Dendritic cell treated with granulocyte-macrophage colony-stimulating factor and Interleukin-4, amounts not matched to agents 40 ng/mL and 50 ng/mL, for 4 days (primary cell): ENCODE measurements at regions of chr20 and their contacts with region 1.

Region 1: DNA sequence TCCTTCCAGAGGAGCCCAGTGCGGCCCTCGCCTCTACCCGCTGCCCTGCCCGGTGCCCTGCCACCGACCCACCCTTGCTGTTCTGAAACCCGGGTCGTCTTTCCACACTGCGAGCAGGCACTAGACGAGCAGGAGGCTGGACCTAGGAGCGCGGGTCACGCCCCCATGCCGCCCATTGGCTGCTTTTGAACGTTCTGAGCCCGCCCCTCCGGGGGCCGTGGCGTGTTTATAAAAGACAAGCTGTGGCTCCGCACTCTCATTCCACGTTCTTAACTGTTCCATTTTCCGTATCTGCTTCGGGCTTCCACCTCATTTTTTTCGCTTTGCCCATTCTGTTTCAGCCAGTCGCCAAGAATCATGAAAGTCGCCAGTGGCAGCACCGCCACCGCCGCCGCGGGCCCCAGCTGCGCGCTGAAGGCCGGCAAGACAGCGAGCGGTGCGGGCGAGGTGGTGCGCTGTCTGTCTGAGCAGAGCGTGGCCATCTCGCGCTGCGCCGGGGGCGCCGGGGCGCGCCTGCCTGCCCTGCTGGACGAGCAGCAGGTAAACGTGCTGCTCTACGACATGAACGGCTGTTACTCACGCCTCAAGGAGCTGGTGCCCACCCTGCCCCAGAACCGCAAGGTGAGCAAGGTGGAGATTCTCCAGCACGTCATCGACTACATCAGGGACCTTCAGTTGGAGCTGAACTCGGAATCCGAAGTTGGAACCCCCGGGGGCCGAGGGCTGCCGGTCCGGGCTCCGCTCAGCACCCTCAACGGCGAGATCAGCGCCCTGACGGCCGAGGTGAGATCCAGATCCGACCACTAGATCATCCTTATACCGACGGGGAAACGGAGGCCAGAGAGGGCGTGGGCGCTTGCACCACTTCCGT is at the start of gene ID1:
- H3K4me3 Mint-ChIP-seq: peak within 1 kb of the TSS; percentile 91
- H3K27ac Mint-ChIP-seq: peak within 1 kb of the TSS; percentile 50
- H3K4me1 Mint-ChIP-seq: peaks cover 38% of the 10 kb centered on the region
- H3K27me3 Mint-ChIP-seq: peaks cover 49% of the 10 kb centered on the region

Region 2: GRCh38 chr20:31274441-31274840 is 330.8 kb before region 1 on chr20:
- intact Hi-C with region 1: no loop called
- H3K4me3 Mint-ChIP-seq: no peak overlapping the region
- H3K27ac Mint-ChIP-seq: no peak overlapping the region
- H3K4me1 Mint-ChIP-seq: no peaks in the 10 kb centered on the region
- H3K27me3 Mint-ChIP-seq: no peaks in the 10 kb centered on the region

Region 3: GRCh38 chr20:31514159-31515071 is 90.9 kb before region 1 on chr20 and contains the start of gene HM13:
- intact Hi-C with region 1: loop called (anchors 5 kb)
- H3K4me3 Mint-ChIP-seq: peak within 1 kb of the TSS; percentile 33
- H3K27ac Mint-ChIP-seq: no peak within 1 kb of the TSS
- H3K4me1 Mint-ChIP-seq: peaks cover 8% of the 10 kb centered on the region
- H3K27me3 Mint-ChIP-seq: no peaks in the 10 kb centered on the region

Region 4: GRCh38 chr20:31572701-31573554 is 32.3 kb before region 1 on chr20:
- intact Hi-C with region 1: loop called (anchors 2 kb)
- H3K4me3 Mint-ChIP-seq: peak overlapping the region; percentile 82
- H3K27ac Mint-ChIP-seq: peak overlapping the region; percentile 87
- H3K4me1 Mint-ChIP-seq: peaks cover 31% of the 10 kb centered on the region
- H3K27me3 Mint-ChIP-seq: no peaks in the 10 kb centered on the region